ENCODE measurements at regions of chr6 and their contacts with region 1.

Region 1: DNA sequence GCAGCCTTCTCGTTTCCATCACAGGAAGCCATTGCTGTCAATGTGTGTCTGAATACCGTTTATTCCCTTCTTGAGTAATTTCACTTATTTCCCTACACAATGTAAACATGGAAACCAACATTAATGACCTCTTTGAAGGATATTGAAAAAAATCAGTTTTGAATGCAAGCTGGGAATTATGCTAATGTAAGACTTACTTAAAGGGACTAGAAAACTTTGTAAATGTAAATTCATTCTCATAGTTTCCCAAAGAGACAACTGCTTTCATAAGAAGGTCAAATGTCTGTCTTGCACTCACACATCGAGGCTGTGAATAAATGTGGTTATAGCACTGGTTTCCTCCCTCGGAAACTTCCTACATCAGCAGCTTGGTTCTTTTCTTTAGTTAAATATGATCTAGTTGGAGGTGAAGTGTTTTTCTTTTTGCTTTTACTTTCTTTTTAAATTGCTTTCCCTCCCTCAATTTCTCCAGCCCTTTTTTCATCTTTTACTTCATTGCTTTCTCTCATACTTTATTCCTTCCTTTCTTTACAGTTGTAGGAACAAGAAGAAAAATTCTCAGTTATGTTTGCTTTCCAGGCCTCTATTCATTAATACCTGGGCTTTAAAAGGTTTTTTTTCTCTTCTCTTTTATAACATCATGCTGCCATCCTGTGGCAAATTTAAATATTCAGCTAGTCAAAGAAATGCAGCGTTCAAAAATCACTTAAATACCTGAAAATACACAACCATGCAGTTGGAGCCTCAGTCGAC is 108.3 kb downstream of the TNFAIP3 start:
- DNase-seq: peak; percentile 60
- ATAC-seq: peak; percentile 83
- H3K4me3 Mint-ChIP-seq: peak overlapping the region; percentile 69
- H3K27ac Mint-ChIP-seq: peak overlapping the region; percentile 91
- H3K4me1 Mint-ChIP-seq: peaks cover 57% of the 10 kb centered on the region
- H3K27me3 Mint-ChIP-seq: no peaks in the 10 kb centered on the region

Region 2: GRCh38 chr6:137707590-137708360 is 267.6 kb before region 1 on chr6:
- CTCF ChIA-PET with region 1: interaction called, 35 read pairs
- DNase-seq: peak; percentile 94
- ATAC-seq: peak; percentile 82
- H3K4me3 Mint-ChIP-seq: peak overlapping the region; percentile 59
- H3K27ac Mint-ChIP-seq: peak overlapping the region; percentile 90
- H3K4me1 Mint-ChIP-seq: peaks cover 71% of the 10 kb centered on the region
- H3K27me3 Mint-ChIP-seq: no peaks in the 10 kb centered on the region

Region 3: DNA sequence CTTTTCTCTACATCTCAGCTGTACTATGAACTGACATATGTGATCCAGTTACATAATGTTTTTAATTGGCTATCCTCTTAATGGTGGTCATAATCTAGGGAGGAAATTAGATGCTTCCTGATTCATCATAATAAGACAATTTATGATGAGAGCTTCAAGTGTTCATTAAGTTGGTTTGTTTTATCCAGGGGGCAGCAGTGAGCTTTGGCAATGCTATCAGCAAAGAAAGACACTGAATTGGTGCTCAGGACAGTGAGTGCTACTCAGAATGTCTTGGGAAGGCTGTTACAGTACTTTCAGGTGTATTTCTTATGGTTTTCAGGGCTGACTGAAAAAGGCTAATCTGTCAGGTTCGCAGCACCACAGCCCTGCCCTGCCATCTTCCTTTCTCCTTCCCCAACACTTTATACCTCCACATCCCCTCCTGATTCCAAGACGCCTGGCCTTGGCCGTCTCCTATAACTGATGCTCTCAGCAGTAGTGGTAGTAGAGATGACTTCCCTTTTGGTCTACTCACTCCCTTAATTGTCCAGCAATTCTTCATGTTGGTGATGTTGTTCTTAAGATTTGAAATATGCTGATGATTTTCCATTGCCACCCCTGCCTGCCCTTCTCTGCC is 175.3 kb before region 1 on chr6:
- CTCF ChIA-PET with region 1: interaction called, 14 read pairs
- DNase-seq: peak; percentile 77
- ATAC-seq: peak; percentile 90
- H3K4me3 Mint-ChIP-seq: no peak overlapping the region
- H3K27ac Mint-ChIP-seq: peak overlapping the region; percentile 62
- H3K4me1 Mint-ChIP-seq: peaks cover 55% of the 10 kb centered on the region
- H3K27me3 Mint-ChIP-seq: no peaks in the 10 kb centered on the region

Region 4: DNA sequence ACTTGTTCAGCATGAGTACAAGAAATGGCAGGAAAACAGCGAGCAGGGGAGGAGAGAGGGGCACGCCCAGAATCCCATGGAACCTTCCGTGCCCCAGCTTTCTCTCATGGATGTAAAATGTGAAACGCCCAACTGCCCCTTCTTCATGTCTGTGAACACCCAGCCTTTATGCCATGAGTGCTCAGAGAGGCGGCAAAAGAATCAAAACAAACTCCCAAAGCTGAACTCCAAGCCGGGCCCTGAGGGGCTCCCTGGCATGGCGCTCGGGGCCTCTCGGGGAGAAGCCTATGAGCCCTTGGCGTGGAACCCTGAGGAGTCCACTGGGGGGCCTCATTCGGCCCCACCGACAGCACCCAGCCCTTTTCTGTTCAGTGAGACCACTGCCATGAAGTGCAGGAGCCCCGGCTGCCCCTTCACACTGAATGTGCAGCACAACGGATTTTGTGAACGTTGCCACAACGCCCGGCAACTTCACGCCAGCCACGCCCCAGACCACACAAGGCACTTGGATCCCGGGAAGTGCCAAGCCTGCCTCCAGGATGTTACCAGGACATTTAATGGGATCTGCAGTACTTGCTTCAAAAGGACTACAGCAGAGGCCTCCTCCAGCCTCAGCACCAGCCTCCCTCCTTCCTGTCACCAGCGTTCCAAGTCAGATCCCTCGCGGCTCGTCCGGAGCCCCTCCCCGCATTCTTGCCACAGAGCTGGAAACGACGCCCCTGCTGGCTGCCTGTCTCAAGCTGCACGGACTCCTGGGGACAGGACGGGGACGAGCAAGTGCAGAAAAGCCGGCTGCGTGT is 96.7 kb before region 1 on chr6:
- CTCF ChIA-PET with region 1: interaction called, 62 read pairs
- DNase-seq: no peak
- ATAC-seq: no peak
- H3K4me3 Mint-ChIP-seq: no peak overlapping the region
- H3K27ac Mint-ChIP-seq: peak overlapping the region; percentile 43
- H3K4me1 Mint-ChIP-seq: peaks cover 82% of the 10 kb centered on the region
- H3K27me3 Mint-ChIP-seq: no peaks in the 10 kb centered on the region

Region 5: GRCh38 chr6:137944793-137945498 is 30.4 kb before region 1 on chr6:
- CTCF ChIA-PET with region 1: interaction called, 32 read pairs
- DNase-seq: peak; percentile 47
- ATAC-seq: peak; percentile 73
- H3K4me3 Mint-ChIP-seq: no peak overlapping the region
- H3K27ac Mint-ChIP-seq: no peak overlapping the region
- H3K4me1 Mint-ChIP-seq: peaks cover 45% of the 10 kb centered on the region
- H3K27me3 Mint-ChIP-seq: no peaks in the 10 kb centered on the region

Region 6: DNA sequence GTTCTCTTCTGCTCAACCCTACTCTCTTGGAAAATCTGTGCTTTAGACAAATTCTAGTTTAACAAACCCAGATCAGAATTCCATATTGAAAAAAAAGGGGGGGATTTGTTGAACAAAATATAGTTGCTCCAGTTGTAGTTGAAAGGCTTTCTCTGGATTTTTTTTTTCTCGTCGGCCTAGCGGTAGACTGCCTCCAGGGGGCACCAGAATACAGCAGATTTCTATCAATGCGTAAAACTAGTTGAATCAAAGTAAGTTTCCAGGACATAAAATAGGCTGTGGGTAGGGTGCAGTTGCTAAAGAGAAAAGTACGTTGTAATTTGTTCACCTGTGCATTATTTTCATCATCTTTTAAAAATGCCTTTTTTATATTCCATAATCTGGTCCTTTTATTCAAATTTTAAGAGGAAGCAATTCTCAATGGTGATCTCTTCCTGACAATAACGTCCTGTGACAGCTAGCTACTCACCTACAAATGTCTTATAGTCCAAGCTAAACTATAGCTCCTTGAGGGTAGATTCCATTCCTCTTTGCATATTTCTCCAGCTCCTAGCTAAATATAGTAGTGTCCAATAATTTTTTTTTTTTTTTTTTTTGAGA is 26.5 kb after region 1 on chr6:
- CTCF ChIA-PET with region 1: interaction called, 75 read pairs
- DNase-seq: peak; percentile 77
- ATAC-seq: no peak
- H3K4me3 Mint-ChIP-seq: no peak overlapping the region
- H3K27ac Mint-ChIP-seq: no peak overlapping the region
- H3K4me1 Mint-ChIP-seq: peaks cover 11% of the 10 kb centered on the region
- H3K27me3 Mint-ChIP-seq: peaks cover 3% of the 10 kb centered on the region

Measured in activated CD8-positive, alpha-beta memory T cell treated with anti-CD3 and anti-CD28 coated beads, Interleukin-2, amount 10 ng/mL, durations not matched to agents 7 days and 5 days (primary cell).